GM12878 (cell line): ENCODE measurements at regions of chr2 and their contacts with region 1.

Region 1: GRCh38 chr2:181586569-181587081 is 70.3 kb downstream of the CERKL start:
- DNase-seq: peak; percentile 81
- ATAC-seq: peak; percentile 96
- H3K4me3 ChIP-seq: no peak overlapping the region
- H3K27ac ChIP-seq: peak overlapping the region; percentile 12; the same call in 1 of the 2 replicates
- H3K4me1 ChIP-seq: peaks cover 11% of the 10 kb centered on the region
- H3K27me3 ChIP-seq: no peaks in the 10 kb centered on the region
- CTCF ChIP-seq: no peak
- EP300 ChIP-seq: peak; percentile 45 to 68; a peak in 3 of 4 replicates
- POLR2A ChIP-seq: no peak
- RAD21 ChIP-seq: no peak

Region 2: GRCh38 chr2:181924336-181924735 is 337.7 kb after region 1 on chr2:
- CTCF ChIA-PET with region 1: no interaction called
- POLR2A ChIA-PET with region 1: no interaction called
- RAD21 ChIA-PET with region 1: no interaction called
- SMC1A ChIA-PET with region 1: no interaction called
- in situ Hi-C with region 1: no loop called
- intact Hi-C with region 1: no loop called
- DNase-seq: no peak
- ATAC-seq: no peak
- H3K4me3 ChIP-seq: no peak overlapping the region
- H3K27ac ChIP-seq: no peak overlapping the region
- H3K4me1 ChIP-seq: no peaks in the 10 kb centered on the region
- H3K27me3 ChIP-seq: no peaks in the 10 kb centered on the region
- CTCF ChIP-seq: no peak
- EP300 ChIP-seq: no peak
- POLR2A ChIP-seq: no peak
- RAD21 ChIP-seq: no peak

Region 3: GRCh38 chr2:182088681-182089320 is 502.2 kb after region 1 on chr2:
- CTCF ChIA-PET with region 1: no interaction called
- POLR2A ChIA-PET with region 1: no interaction called
- RAD21 ChIA-PET with region 1: no interaction called
- SMC1A ChIA-PET with region 1: no interaction called
- in situ Hi-C with region 1: no loop called
- intact Hi-C with region 1: loop called (anchors 10 kb)
- DNase-seq: no peak
- ATAC-seq: no peak
- H3K4me3 ChIP-seq: no peak overlapping the region
- H3K27ac ChIP-seq: no peak overlapping the region
- H3K4me1 ChIP-seq: no peaks in the 10 kb centered on the region
- H3K27me3 ChIP-seq: no peaks in the 10 kb centered on the region; a peak in 1 of 4 replicates
- CTCF ChIP-seq: no peak
- EP300 ChIP-seq: no peak
- POLR2A ChIP-seq: no peak
- RAD21 ChIP-seq: no peak